PC-9 (cell line): ENCODE measurements at regions of chr7 and their contacts with region 1.

Region 1: DNA sequence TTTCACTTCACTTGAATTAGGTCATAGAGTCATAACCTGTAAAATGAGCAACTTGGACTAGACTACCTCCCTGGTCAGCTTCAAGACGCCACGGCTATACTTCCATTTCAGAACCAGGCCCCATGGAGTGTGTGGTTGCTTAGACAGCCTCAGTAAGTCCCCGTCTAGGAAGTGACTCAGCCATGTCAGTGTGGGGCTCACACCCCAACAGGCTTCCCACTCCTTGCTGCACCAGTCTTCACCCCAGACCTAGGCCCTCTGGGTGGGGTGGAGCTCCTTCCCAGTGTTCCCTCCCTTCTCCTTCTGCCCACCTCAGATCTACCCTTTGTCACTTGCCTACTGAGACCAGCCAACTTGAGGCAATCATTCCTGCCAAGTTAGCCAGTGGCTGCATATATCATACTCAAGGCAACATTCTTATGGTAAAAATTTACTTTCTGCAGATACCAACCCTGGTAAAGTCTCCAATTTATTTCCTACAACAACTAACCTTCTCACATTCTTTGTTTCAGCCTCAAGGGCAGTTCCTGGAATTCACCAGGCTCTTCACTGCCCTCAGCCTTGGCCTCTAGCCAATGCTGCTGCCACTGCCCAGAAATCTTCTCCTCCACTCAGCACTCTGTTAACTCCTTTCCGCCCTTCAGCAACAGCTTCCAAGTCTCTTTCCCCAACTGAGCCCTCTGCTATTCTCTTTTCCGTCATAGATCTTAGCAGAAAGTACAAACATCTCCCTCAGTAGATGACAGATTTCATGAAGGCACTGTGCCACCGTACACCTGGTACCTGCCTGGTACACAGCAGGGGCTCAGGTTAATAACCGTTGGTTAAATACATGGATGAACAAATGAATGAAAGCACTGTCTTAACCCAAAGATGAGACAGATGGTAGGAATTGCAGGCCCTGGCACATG is 31.3 kb upstream of the ZNRF2 start:
- DNase-seq: peak; percentile 60 to 77
- H3K4me3 ChIP-seq: no peak overlapping the region
- H3K27ac ChIP-seq: 0 out of 2 replicates have a peak overlapping the region, but pooled peaks have one; percentile 12
- H3K4me1 ChIP-seq: peaks cover 15% of the 10 kb centered on the region
- H3K27me3 ChIP-seq: no peaks in the 10 kb centered on the region
- CTCF ChIP-seq: no peak

Region 2: GRCh38 chr7:28375729-28376128 is 1877.4 kb before region 1 on chr7:
- CTCF ChIA-PET with region 1: no interaction called
- POLR2A ChIA-PET with region 1: interaction called, 11 read pairs
- intact Hi-C with region 1: no loop called
- DNase-seq: no peak
- H3K4me3 ChIP-seq: no peak overlapping the region
- H3K27ac ChIP-seq: no peak overlapping the region
- H3K4me1 ChIP-seq: peaks cover 16% of the 10 kb centered on the region
- H3K27me3 ChIP-seq: no peaks in the 10 kb centered on the region
- CTCF ChIP-seq: no peak

Region 3: DNA sequence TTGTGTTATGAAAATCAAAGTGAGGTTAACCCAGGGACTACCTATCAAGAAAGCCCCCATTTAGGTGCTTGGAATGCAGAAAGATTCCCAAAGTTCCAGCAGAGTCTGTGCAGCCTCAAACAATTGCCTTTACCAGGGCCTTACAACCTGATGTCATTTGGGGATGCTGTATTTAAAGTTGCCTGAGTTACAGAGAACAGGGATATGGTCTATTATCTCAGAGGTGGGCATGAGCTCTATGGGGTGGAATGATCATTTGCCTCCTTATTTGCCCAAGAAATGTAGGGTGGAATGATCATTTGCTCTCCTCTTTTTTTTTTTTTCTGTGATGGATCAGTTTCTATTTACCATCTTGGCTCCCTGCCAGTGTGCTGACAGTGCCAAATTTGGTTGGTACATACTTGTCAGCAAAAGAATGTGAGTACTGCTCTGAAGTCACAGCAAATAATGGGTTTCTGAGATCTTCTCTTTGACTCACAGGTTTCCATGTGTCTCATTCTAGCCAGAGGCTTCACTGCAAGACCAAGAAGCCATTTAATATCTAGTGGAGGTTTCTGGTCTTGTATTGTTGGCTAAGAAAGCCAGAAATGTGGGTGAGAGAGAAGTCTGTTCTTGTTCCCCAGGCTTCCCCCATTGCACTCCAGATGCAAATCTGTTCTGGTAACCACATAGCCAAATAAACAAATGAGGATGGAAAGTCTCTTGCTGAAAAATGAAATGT is 14.3 kb before region 1 on chr7:
- CTCF ChIA-PET with region 1: no interaction called
- POLR2A ChIA-PET with region 1: no interaction called
- intact Hi-C with region 1: loop called (anchors 2 kb)
- DNase-seq: peak; percentile 76 to 96
- H3K4me3 ChIP-seq: no peak overlapping the region
- H3K27ac ChIP-seq: peak overlapping the region; percentile 28
- H3K4me1 ChIP-seq: peaks cover 20% of the 10 kb centered on the region
- H3K27me3 ChIP-seq: no peaks in the 10 kb centered on the region
- CTCF ChIP-seq: no peak